ENCODE measurements at regions of chr1 and their contacts with region 1.

Region 1: GRCh38 chr1:23916209-23917131 is 3.3 kb upstream of the CNR2 start:
- DNase-seq: no peak
- ATAC-seq: peak; percentile 79

Region 2: DNA sequence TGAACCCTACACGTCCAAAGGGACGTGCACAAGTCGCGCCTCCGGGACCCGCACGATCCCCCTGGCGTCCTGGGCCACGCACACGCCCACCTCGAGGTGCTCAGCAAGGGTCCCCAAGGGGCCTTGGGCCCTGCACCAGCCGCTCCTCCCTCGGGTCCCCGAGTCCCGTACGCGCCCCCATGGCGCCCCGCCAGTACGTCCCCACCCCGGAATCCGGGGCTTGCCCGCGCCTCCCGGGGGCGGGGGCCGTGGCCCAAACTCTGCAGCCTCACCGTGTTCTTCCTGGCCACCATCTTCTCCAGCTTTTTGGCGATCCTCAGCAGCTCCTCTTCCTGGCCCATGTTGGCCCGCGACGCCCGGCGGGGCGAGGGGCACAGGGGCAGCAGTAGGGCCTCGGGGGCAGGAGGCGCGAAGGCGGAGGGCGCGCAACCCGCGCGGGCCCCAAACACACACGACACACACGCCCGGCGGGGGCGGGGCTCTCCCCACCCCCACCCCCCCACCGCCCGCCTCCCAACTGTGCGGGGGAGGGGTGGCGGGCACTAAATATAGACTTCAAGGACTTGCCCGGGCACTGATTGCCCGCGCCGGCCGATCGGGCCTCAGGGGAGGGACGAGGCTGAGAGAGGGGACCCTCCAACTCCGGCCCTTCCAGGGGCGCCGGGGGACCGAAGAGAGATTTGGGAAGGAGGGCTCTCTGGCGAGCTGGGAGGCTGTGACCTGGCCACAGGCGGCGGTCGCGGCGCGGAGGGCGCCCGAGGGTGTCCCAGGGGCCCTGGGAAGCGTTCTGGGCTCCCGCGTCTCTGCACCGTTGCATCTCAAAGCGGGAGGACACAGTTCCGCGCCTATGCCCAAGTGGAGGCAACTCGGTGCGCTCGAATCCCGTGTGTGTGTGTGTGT is 491.9 kb before region 1 on chr1 and contains the start of gene TCEA3:
- intact Hi-C with region 1: no loop called
- DNase-seq: peak; percentile 79
- ATAC-seq: peak; percentile 74
- total RNA-seq, gene TCEA3: 73.6 TPM

Region 3: GRCh38 chr1:23559136-23559984 is 357.1 kb before region 1 on chr1 and contains the start of gene ID3:
- intact Hi-C with region 1: loop called (anchors 10 kb)
- DNase-seq: peak; percentile 99
- ATAC-seq: peak; percentile 83
- total RNA-seq, gene ID3: 90.3 TPM

Region 4: GRCh38 chr1:23777979-23778814 is 138.3 kb before region 1 on chr1 and contains the start of gene PITHD1:
- intact Hi-C with region 1: loop called (anchors 1 kb)
- DNase-seq: peak; percentile 92
- ATAC-seq: peak; percentile 87
- total RNA-seq, gene PITHD1: 42.7 TPM

Region 5: DNA sequence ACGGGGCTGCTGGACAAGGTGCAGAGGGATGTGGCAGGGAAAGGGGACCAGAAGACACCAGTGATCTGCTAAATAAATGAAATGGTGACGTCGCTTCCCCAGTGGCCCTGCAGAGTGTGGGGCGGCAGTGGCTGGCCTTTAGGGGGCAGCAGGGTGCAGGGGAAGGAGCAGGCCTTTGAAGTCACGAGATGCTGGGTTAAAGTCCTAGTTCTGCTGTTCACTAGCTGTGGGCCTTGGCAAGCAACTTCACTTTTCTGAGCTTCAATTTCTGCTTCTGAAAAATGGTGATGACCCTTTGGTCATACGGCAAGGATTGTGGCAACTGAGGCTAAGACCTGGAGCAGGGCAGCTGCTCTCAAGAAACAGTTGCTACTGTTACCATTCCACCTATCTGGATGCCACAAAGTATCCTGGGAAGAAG is 106.7 kb before region 1 on chr1:
- intact Hi-C with region 1: loop called (anchors 5 kb)
- DNase-seq: peak; percentile 87
- ATAC-seq: peak; percentile 77

Region 6: GRCh38 chr1:23959041-23959460 is 42.6 kb after region 1 on chr1:
- intact Hi-C with region 1: loop called (anchors 1 kb)
- DNase-seq: peak; percentile 91
- ATAC-seq: peak; percentile 79

Region 7: GRCh38 chr1:24048205-24048869 is 131.9 kb after region 1 on chr1:
- intact Hi-C with region 1: no loop called
- DNase-seq: no peak
- ATAC-seq: no peak